ENCODE measurements at regions of chrX and their contacts with region 1.

Region 1: GRCh38 chrX:17629519-17629918 is 107.8 kb upstream of the SCML1 start:
- DNase-seq: no peak
- H3K4me3 ChIP-seq: no peak overlapping the region
- CTCF ChIP-seq: no peak

Region 2: DNA sequence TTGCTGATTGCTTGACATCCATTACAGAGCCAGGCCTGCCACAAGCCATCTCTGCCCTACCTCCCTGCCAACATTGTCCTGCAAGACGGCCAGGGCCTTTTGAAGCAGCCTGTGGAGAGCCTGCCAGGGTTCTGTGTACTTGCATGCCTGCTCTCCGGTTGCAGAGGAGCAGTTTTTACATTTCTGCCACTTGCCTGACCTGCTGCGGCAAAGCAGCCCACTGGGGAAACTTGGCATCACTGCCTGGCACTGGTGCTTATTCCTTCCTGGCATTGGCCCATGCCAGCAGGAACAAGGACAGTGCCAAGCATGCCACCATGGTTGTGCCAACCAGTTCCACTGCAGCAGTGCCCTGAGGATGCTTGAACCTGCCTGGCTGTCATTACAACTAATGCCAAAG is 87.4 kb before region 1 on chrX:
- in situ Hi-C with region 1: no loop called
- DNase-seq: no peak
- H3K4me3 ChIP-seq: no peak overlapping the region
- CTCF ChIP-seq: no peak

Region 3: GRCh38 chrX:17559728-17560379 is 69.7 kb before region 1 on chrX:
- in situ Hi-C with region 1: loop called (anchors 5 kb)
- DNase-seq: peak; percentile 85
- H3K4me3 ChIP-seq: no peak overlapping the region
- CTCF ChIP-seq: no peak

Region 4: GRCh38 chrX:17590892-17591740 is 38.4 kb before region 1 on chrX:
- in situ Hi-C with region 1: no loop called
- DNase-seq: peak; percentile 57
- H3K4me3 ChIP-seq: no peak overlapping the region
- CTCF ChIP-seq: peak; percentile 72

Region 5: DNA sequence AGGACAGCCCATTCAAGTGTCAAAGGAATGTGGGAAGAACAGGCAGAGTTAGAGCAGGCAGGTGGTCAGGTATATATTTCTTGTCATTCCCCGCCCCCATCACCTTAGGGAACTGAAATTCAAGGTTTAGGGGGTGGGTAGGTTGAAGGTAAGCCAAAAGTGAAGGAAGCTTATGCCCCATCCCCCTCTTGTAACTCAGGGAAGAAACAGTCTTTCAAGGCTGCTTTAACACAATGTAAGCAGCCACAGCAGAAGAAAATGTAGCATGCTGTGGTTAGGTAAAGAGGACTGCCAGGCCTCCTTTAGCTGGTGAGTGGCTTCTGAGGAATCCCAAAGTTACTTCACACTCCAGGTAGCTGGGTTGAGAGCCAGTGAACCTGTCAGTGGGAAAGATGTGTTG is 920.1 kb after region 1 on chrX:
- in situ Hi-C with region 1: no loop called
- DNase-seq: peak; percentile 1
- H3K4me3 ChIP-seq: no peak overlapping the region
- CTCF ChIP-seq: no peak

Measured in astrocyte of the cerebellum (primary cell).